PC-9 (cell line): ENCODE measurements at regions of chr7 and their contacts with region 1.

Region 1: DNA sequence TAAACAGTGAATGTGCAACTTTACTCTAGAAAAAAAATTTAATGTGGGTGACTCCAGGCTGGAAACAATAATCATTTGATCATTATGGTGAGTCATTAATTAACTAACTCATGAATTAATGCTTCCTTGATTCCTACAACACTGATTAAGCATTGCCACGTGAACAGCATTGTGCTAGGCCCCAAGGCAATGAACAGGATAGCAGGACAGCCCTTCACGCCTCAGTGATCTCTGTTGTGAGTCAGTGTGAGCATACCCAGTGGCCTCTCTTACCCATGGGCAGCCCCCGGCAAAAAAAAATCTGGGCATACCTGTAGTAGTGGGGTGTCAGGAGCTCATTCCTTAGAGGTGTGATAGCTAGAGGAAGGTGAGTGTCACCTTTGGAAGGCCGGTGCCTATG is 76.0 kb downstream of the DENND2A start:
- DNase-seq: peak; percentile 88 to 99
- H3K4me3 ChIP-seq: no peak overlapping the region
- H3K27ac ChIP-seq: peak overlapping the region; percentile 68
- H3K4me1 ChIP-seq: peaks cover 61% of the 10 kb centered on the region
- H3K27me3 ChIP-seq: no peaks in the 10 kb centered on the region
- CTCF ChIP-seq: no peak

Region 2: DNA sequence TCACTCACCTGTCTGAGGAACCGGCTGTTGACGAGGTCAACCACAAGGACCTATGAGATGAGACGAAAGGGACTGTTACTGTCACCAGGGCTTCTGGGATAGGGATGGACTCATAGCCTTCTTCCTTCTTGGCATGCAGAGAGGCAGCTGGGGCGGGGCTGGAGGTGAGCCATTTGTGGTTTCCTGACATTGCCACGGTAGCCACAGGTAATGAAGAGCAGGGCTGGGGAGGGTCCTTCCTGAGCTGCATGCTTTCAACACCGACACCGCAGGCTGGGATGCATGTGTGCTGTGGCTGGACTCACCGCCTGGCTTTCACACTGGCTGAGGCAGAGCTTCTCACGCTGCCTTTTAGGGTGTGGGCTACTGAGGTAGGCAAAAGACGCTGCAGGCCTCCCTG is 38.9 kb before region 1 on chr7:
- CTCF ChIA-PET with region 1: interaction called, 3 read pairs
- POLR2A ChIA-PET with region 1: no interaction called
- intact Hi-C with region 1: loop called (anchors 2 kb)
- DNase-seq: peak; percentile 65 to 86
- H3K4me3 ChIP-seq: no peak overlapping the region
- H3K27ac ChIP-seq: no peak overlapping the region
- H3K4me1 ChIP-seq: peaks cover 16% of the 10 kb centered on the region
- H3K27me3 ChIP-seq: no peaks in the 10 kb centered on the region
- CTCF ChIP-seq: no peak

Region 3: DNA sequence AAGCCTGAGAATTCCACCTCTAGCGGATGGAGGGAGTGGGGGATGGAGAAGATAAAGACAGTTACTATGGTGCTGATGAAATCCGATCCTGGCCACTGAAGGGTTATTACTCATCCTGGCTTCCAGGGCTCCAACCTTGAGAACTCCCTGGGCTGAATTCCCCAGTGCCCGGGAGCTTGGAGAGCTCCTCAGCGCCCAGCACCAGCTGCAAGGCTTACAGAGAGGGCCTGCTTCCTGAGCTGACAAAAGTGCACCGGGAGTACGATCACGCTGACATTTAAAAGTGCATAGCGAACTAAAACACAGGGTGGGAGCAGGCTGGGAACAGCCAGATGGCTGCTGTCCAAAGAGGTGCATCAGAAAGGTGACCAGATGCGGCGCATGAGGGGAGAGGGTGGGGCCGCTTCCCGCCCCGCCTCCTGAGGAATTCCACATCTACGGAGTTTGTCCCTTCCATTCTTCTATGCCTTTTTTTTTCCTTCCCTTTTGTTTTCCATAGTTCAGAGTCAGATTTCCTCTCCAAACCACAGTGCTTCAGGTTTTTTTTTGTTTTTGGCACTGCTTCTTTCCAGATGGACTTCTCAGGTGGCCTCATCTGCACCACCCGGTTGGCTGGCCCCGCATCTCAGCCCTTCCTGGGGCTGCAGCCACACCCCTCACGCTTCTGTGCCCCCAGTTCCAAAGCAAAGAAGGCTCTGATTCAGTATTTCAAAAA is 23.0 kb before region 1 on chr7:
- CTCF ChIA-PET with region 1: no interaction called
- POLR2A ChIA-PET with region 1: no interaction called
- intact Hi-C with region 1: loop called (anchors 1 kb)
- DNase-seq: peak; percentile 68 to 82
- H3K4me3 ChIP-seq: peak overlapping the region; percentile 40; the same call in 1 of the 2 replicates
- H3K27ac ChIP-seq: peak overlapping the region; percentile 54
- H3K4me1 ChIP-seq: peaks cover 19% of the 10 kb centered on the region
- H3K27me3 ChIP-seq: no peaks in the 10 kb centered on the region
- CTCF ChIP-seq: no peak